HEK293 (cell line): ENCODE measurements at regions of chr9 and their contacts with region 1.

Region 1: GRCh38 chr9:121222524-121223171 is 21.0 kb upstream of the RAB14 start:
- H3K4me3 ChIP-seq: no peak overlapping the region
- H3K27ac ChIP-seq: no peak overlapping the region
- H3K4me1 ChIP-seq: peaks cover 3% of the 10 kb centered on the region; the same call in 1 of the 2 replicates
- CTCF ChIP-seq: no peak

Region 2: DNA sequence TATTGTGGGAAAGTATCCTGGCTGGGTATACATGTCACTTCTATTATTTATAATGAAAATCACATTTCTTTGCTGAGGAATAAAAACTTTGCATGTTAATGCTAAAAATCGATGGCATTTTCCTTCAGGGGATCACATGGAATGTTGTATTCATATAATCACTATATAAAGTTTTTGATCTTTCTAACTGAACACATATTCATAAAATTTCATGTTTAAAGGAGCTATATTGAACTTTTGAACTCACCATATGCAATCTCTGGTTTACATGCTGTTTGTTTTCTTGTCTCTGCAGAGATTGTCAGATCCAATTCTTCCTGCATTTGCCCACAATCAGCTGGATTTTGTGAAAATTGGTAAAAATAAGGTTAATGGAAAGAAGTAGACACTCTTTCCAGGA is 262.6 kb before region 1 on chr9:
- CTCF ChIA-PET with region 1: no interaction called
- POLR2A ChIA-PET with region 1: no interaction called
- H3K4me3 ChIP-seq: no peak overlapping the region
- H3K27ac ChIP-seq: no peak overlapping the region
- H3K4me1 ChIP-seq: no peaks in the 10 kb centered on the region
- CTCF ChIP-seq: no peak

Region 3: DNA sequence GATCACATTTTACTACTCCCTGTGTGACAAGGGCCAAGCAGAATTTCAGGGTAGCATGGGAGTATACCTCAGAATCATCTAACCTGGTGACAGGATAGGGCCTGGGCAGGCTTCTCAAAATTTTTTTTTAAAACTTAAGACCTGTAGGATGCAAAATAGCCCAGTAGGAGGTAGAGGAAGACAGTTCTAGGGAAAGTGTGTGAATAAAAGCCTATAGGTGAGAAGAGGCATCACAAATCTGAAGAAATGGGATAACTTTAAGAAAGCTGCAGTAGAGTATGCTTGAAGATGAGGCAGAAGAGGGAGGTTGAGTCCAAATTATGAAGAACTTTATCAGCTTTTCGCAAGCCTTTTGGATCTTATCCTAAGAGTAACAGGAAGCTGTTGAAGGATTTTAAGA is 115.6 kb before region 1 on chr9:
- CTCF ChIA-PET with region 1: no interaction called
- POLR2A ChIA-PET with region 1: no interaction called
- H3K4me3 ChIP-seq: no peak overlapping the region
- H3K27ac ChIP-seq: no peak overlapping the region
- H3K4me1 ChIP-seq: no peaks in the 10 kb centered on the region
- CTCF ChIP-seq: no peak

Region 4: GRCh38 chr9:121233906-121234901 is 11.6 kb after region 1 on chr9:
- CTCF ChIA-PET with region 1: interaction called, 23 read pairs
- POLR2A ChIA-PET with region 1: no interaction called
- H3K4me3 ChIP-seq: no peak overlapping the region
- H3K27ac ChIP-seq: no peak overlapping the region
- H3K4me1 ChIP-seq: no peaks in the 10 kb centered on the region
- CTCF ChIP-seq: no peak